ENCODE measurements at regions of chr3 and their contacts with region 1.

Region 1: GRCh38 chr3:85576091-85576690 is 617.4 kb downstream of the CADM2 start:
- DNase-seq: peak in 9 of 10 donors; percentile 49 to 95 (median 81)

Region 2: GRCh38 chr3:84958495-84959469 is 617.4 kb before region 1 on chr3 and contains the start of gene CADM2:
- intact Hi-C with region 1: loop called (anchors 5 kb)
- DNase-seq: peak; percentile 91 to 99 (median 94)

Measured in posterior cingulate gyrus (tissue), 11 donors.